ENCODE measurements at regions of chr2 and their contacts with region 1.

Region 1: DNA sequence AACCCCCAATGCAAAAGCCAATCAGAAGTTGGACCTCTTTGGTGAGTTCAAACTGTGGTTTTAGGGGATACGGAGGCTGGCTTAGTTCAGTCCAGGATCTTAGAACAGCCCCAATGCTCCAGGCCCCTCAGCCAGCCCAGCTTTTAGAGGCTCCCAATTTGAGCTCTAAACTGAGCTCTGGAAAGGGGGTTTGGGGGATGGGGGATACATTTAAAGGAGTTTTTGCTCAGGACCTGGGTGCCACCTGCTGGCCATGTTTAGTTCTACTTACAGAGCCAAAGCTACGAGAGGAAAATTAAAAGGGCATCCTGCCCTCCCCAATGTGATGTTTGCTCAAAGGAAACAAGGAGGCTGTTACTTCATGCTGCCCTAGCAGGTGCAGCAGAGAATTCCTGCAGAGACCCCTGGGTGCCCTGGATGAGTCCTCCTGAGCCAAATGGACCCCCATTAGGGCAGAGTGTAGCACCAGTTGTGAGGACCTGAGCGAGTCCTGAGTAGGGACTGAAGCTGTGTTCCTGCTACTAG is 15.9 kb upstream of the TMEM214 start:
- DNase-seq: peak in 4 of 5 donors; percentile 36 to 63 (median 44)
- ATAC-seq: peak in 3 of 4 donors; percentile 19 to 62 (median 34)
- H3K4me3 ChIP-seq: no peak overlapping the region
- H3K27ac ChIP-seq: no peak overlapping the region
- H3K4me1 ChIP-seq: peaks cover 0 to 59% (median 29%) of the 10 kb centered on the region in 12 donors
- H3K27me3 ChIP-seq: no peaks in the 10 kb centered on the region
- CTCF ChIP-seq: peak; percentile 55 to 76 (median 64)
- POLR2A ChIP-seq: no peak

Region 2: DNA sequence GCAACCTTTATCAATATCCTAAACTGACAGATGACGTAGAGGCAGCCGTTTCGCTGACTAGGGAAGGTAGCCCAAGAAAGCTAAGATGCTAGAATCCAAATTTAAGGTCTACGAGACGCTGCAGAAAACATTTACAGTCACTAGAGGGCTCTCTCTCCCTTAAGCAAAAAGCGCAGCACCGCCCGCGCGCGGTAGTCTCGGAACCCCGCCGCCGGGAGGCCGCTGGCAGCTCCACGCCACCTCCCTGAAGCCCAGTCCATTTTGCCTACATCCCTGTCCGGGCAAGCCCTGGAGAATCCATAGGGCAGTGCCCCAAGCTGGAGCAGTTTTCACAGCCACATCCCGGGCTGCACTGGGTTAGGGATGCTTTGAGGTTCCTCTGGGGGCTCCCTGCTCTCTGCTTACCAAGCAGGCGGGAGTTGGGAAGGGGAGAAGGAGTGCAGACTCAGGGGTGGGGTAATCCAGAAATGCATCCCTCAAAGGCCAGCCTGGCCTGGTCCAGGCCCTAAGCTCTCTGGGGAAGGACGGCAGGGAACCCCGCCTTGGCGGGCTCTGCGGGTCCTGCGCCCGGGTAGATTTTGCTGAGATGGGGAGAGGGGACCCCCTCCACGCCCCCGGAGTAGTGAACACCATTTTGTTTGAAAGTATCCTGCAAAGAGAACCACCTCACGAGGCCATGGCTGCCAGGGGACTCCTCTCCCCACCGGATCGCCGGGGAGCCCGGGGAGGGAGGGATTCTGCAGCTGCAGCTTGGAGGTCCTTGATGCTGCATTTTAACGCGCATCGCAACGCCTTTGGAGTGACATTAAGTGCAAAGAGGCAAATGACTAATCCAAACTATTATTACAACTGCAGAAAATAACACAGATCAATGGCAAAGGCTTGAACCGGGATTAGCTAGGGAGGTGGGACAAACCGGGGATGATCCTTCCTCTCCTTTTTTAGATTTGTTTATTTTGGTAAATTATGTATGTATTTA is 170.2 kb before region 1 on chr2:
- intact Hi-C with region 1: loop called in 6 of 10 experiments (anchors 5 to 10 kb)
- DNase-seq: peak; percentile 57 to 82 (median 64)
- ATAC-seq: peak in 3 of 4 donors; percentile 78 to 89 (median 88)
- H3K4me3 ChIP-seq: peak overlapping the region in 1 of 12 donors; percentile 16
- H3K27ac ChIP-seq: no peak overlapping the region
- H3K4me1 ChIP-seq: peaks cover 9 to 39% (median 30%) of the 10 kb centered on the region in 12 donors
- H3K27me3 ChIP-seq: peaks cover 41 to 93% (median 63%) of the 10 kb centered on the region in 9 donors
- CTCF ChIP-seq: peak; percentile 68 to 84 (median 77)
- POLR2A ChIP-seq: no peak

Region 3: GRCh38 chr2:26959331-26959730 is 57.5 kb before region 1 on chr2:
- intact Hi-C with region 1: loop called (anchors 1 to 5 kb)
- DNase-seq: no peak
- ATAC-seq: peak in 1 of 4 donors; percentile 44
- H3K4me3 ChIP-seq: no peak overlapping the region
- H3K27ac ChIP-seq: no peak overlapping the region
- H3K4me1 ChIP-seq: peaks cover 0 to 7% (median 0%) of the 10 kb centered on the region in 12 donors
- H3K27me3 ChIP-seq: peaks cover 0 to 46% (median 7%) of the 10 kb centered on the region in 9 donors
- CTCF ChIP-seq: no peak
- POLR2A ChIP-seq: no peak

Region 4: GRCh38 chr2:26964446-26965130 is 52.3 kb before region 1 on chr2:
- intact Hi-C with region 1: loop called (anchors 1 to 5 kb)
- DNase-seq: no peak
- ATAC-seq: no peak
- H3K4me3 ChIP-seq: no peak overlapping the region
- H3K27ac ChIP-seq: no peak overlapping the region
- H3K4me1 ChIP-seq: peaks cover 0 to 7% (median 0%) of the 10 kb centered on the region in 12 donors
- H3K27me3 ChIP-seq: peaks cover 0 to 8% (median 0%) of the 10 kb centered on the region in 9 donors
- CTCF ChIP-seq: no peak
- POLR2A ChIP-seq: no peak

Region 5: DNA sequence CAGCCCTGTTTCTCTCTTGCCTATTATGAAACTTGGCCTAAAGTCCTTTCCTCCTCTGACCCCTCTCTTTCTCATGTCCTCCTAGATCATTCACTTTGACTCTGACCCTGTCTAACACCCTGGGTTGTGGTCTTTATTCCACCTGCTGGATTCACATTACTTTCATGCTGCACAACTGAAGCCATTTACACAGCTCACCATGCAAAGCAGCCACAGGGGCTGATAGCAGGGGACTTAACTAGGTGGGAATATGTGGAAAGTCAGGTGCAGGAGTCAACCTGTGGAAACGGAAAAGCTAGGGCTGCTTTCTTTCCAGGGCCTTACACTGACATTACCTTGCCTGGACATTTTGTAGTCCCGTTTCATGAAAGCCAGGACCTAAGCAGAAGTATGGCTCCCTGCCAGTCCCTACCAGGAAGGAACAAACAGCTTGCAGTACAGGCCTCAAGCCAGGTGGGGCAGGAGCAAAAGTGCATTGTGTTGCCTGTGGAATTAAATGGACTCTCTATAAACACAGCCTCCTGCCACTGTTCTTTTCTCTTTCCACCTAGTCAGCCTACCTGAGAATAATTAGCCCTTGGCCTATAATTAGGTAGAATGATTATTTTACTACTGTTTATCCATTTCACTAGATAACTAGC is 34.6 kb before region 1 on chr2:
- intact Hi-C with region 1: loop called in 1 of 10 experiments (anchors 5 kb)
- DNase-seq: peak in 4 of 5 donors; percentile 65 to 83 (median 76)
- ATAC-seq: peak; percentile 80 to 90 (median 84)
- H3K4me3 ChIP-seq: no peak overlapping the region
- H3K27ac ChIP-seq: peak overlapping the region in 8 of 12 donors; percentile 14 to 43 (median 29)
- H3K4me1 ChIP-seq: peaks cover 0 to 37% (median 19%) of the 10 kb centered on the region in 12 donors
- H3K27me3 ChIP-seq: no peaks in the 10 kb centered on the region
- CTCF ChIP-seq: peak in 11 of 12 donors; percentile 9 to 55 (median 35)
- POLR2A ChIP-seq: no peak

Region 6: GRCh38 chr2:27191053-27191829 is 174.4 kb after region 1 on chr2:
- intact Hi-C with region 1: no loop called
- DNase-seq: peak in 1 of 5 donors; percentile 29
- ATAC-seq: peak in 3 of 4 donors; percentile 65 to 76 (median 73)
- H3K4me3 ChIP-seq: no peak overlapping the region
- H3K27ac ChIP-seq: no peak overlapping the region
- H3K4me1 ChIP-seq: no peaks in the 10 kb centered on the region
- H3K27me3 ChIP-seq: no peaks in the 10 kb centered on the region
- CTCF ChIP-seq: peak; percentile 46 to 70 (median 56)
- POLR2A ChIP-seq: no peak